Left ventricle myocardium inferior (tissue), 1 donor: ENCODE measurements at regions of chr12 and their contacts with region 1.

Region 1: GRCh38 chr12:101830367-101831325 is at the start of gene GNPTAB:
- DNase-seq: peak; percentile 92
- H3K4me3 ChIP-seq: peak within 1 kb of the TSS; percentile 79
- H3K27ac ChIP-seq: peak within 1 kb of the TSS; percentile 82
- H3K4me1 ChIP-seq: peaks cover 51% of the 10 kb centered on the region
- H3K27me3 ChIP-seq: no peaks in the 10 kb centered on the region
- CTCF ChIP-seq: peak; percentile 82
- total RNA-seq, gene GNPTAB: 55.2 TPM

Region 2: DNA sequence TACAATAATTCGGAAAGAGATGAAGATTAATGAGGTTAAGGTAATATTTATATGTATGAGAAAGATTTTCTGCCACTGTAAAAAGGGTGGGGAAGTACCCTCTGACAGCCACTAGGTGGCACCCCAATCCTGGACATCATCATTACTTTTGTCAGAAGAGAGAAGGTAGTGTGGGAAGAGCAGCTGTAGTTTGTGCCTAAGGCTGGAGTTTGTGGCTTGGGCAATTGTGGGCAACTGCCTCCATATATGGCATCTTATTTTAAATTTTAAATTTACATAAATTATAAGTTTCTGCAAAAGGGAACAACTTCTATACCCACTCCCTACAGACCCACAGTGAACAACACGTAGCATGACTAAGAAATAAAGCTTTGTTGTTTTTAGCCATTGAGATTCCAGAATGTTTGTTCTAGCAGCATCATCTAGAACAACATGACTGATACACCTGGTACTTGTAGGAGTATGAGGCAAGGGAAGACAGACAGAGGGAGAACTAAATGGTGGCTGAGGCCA is 56.9 kb before region 1 on chr12:
- intact Hi-C with region 1: loop called (anchors 5 kb)
- DNase-seq: peak; percentile 22
- H3K4me3 ChIP-seq: no peak overlapping the region
- H3K27ac ChIP-seq: no peak overlapping the region
- H3K4me1 ChIP-seq: peaks cover 15% of the 10 kb centered on the region
- H3K27me3 ChIP-seq: no peaks in the 10 kb centered on the region
- CTCF ChIP-seq: peak; percentile 96